ENCODE measurements at regions of chr16 and their contacts with region 1.

Region 1: DNA sequence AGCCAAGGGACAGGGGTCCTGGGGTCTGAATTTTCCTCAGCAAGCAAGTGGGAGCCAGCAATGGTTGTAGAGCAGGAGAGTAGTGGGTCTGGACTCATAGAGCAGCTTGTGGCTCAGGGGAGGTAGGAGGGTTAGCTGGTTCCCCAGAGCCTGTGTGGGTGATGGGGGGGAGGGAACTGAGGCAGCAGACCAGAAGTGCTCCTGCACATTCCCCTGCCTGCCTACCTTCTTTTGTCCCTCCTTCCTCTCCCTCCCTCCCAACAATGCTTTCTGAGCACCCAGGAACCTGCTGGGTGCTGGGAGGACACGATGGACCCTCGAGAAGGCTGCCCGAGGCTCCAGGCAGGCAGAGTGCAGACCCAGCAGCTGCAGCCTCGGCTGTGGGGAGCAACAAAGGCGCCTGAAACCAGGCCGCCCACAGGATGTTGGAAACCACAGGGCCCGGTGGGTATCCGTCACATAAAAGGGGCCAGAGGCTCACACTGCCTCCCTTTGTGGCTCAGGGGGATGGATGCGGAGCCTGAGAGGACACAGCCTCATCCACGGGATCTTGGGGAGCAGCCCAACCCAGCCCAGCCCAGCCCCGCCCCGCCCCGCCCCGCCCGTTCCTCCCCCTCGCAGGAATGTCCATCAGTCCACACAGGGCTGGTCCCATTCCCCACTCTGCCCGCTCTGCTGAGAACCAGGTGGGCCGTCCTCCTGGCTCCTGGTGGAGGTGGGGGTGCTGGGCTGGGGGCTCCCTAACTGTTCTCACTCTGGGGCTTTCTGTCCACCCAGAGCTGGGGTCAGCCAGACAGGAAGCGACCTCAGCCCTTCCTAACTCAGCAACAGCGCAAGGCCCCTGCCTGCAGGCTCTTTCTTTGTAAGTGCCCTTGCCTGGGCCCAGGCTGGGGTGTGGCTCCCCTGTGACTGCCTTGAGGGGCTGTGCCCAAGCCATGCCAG is 1.7 kb upstream of the NLRC3 start:
- DNase-seq: peak; percentile 77
- H3K4me3 Mint-ChIP-seq: peak overlapping the region; percentile 95
- H3K27ac Mint-ChIP-seq: peak overlapping the region; percentile 78
- H3K4me1 Mint-ChIP-seq: peaks cover 41% of the 10 kb centered on the region
- H3K27me3 Mint-ChIP-seq: no peaks in the 10 kb centered on the region

Region 2: GRCh38 chr16:3530371-3530914 is 48.4 kb before region 1 on chr16:
- CTCF ChIA-PET with region 1: no interaction called
- intact Hi-C with region 1: loop called (anchors 1 kb)
- DNase-seq: no peak
- H3K4me3 Mint-ChIP-seq: no peak overlapping the region
- H3K27ac Mint-ChIP-seq: no peak overlapping the region
- H3K4me1 Mint-ChIP-seq: peaks cover 4% of the 10 kb centered on the region
- H3K27me3 Mint-ChIP-seq: no peaks in the 10 kb centered on the region

Region 3: DNA sequence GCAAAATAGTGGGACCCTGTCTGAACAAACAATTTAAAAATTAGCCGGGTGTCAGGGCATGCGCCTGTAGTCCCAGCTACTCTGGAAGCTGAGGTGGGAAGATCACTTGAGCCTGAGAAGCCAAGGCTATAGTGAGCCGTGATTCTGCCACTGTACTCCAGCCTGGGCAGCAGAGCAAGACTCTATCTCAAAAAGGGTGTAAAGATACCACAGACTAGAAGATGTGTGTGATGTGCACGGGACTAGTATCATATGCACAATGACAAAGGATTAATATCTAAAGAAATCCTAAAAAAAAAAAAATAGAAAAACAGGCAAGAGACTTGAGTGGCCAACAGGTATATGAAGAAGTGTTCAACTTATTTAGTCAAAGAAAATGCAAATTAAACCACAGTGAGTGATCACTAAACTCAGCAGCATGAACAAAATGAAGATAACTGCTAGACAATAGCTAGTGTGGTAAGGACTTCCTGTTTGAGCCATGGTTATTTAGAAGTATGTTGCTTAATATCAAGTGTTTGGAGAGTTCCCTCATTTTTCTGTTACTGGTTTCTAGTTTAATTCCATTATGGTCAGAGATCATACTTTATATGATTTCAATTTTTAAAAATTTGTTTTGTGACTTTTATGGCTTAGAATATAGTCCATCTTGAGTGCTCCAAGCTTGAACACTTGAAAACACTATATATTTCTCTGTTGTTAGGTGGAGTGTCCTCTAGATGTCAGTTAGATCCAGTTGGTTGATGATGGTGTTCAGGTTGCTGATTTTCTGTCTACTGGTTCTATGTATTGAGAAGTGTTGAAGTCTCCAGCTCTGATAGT is 47.2 kb after region 1 on chr16:
- CTCF ChIA-PET with region 1: no interaction called
- intact Hi-C with region 1: loop called (anchors 1 kb)
- DNase-seq: no peak
- H3K4me3 Mint-ChIP-seq: no peak overlapping the region
- H3K27ac Mint-ChIP-seq: peak overlapping the region; percentile 66
- H3K4me1 Mint-ChIP-seq: peaks cover 33% of the 10 kb centered on the region
- H3K27me3 Mint-ChIP-seq: no peaks in the 10 kb centered on the region

Measured in activated naive CD4-positive, alpha-beta T cell treated with anti-CD3 and anti-CD28 coated beads for 36 hours (primary cell).